AG04450 (cell line): ENCODE measurements at regions of chr17 and their contacts with region 1.

Region 1: DNA sequence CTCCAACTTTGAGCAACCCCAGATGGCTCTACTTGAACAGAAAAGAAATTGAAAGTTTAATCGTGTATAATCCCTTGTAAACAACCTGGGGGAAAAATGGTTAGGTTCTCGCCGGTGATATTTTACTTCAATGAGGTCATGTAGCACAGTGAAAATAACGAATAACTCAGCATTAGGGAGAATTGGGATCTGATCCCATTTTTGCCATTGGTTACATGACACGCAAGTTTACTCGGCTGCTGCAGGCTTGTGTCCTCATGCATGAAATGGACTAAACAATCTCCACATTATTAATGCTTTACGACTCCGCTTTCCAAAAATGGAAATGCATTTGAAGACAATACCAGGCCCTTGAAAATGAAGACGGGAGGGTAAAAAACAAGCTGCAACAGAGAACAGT is 45.5 kb upstream of the LRRC37A3 start:
- DNase-seq: no peak
- H3K4me3 ChIP-seq: no peak overlapping the region
- H3K27ac ChIP-seq: no peak overlapping the region
- H3K27me3 ChIP-seq: no peaks in the 10 kb centered on the region
- CTCF ChIP-seq: no peak

Region 2: DNA sequence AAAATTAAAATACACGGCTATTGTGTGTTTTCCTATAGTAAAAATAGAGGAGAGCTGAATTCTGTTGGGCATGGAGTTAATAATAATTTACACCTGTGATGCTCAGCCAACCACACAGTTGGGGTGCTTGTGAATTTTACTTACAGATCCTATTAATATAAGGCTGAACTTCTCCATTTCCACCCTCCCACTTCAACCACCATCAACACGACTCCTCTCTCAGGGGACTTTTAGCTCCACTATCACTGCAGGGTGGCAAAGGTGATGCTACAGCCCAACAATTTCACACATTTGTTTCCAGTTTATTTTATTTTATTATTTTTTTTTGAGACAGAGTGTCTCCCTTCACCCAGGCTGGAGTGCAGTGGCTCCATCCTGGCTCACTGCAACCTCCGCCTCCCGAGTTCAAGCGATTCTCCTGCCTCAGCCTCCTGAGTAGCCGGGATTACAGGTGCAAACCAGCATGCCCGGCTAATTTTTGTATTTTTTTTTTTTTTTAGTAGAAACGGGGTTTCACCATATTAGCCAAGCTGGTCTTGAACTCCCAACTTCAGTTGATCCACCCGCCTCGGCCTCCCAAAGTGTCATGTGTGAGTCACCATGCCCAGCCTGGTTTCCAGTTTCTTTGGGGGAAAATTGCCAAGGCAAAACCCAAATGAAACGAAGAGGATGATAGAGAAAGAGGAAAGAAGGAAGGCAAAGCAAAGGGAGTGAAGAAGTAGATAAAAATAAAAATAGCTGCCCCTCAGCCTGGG is 33.8 kb after region 1 on chr17:
- CTCF ChIA-PET with region 1: no interaction called
- POLR2A ChIA-PET with region 1: no interaction called
- DNase-seq: no peak
- H3K4me3 ChIP-seq: no peak overlapping the region
- H3K27ac ChIP-seq: no peak overlapping the region
- H3K27me3 ChIP-seq: no peaks in the 10 kb centered on the region
- CTCF ChIP-seq: no peak

Region 3: GRCh38 chr17:65027305-65027704 is 62.5 kb after region 1 on chr17:
- CTCF ChIA-PET with region 1: no interaction called
- POLR2A ChIA-PET with region 1: interaction called, 11 read pairs
- DNase-seq: no peak
- H3K4me3 ChIP-seq: no peak overlapping the region
- H3K27ac ChIP-seq: no peak overlapping the region
- H3K27me3 ChIP-seq: no peaks in the 10 kb centered on the region
- CTCF ChIP-seq: peak; percentile 57